ENCODE measurements at regions of chr11 and their contacts with region 1.

Region 1: GRCh38 chr11:36265793-36266628 is 23.2 kb downstream of the COMMD9 start:
- DNase-seq: peak; percentile 58 to 80
- ATAC-seq: peak; percentile 62
- H3K4me3 ChIP-seq: no peak overlapping the region
- H3K27ac ChIP-seq: no peak overlapping the region
- H3K4me1 ChIP-seq: no peaks in the 10 kb centered on the region
- H3K27me3 ChIP-seq: no peaks in the 10 kb centered on the region

Region 2: DNA sequence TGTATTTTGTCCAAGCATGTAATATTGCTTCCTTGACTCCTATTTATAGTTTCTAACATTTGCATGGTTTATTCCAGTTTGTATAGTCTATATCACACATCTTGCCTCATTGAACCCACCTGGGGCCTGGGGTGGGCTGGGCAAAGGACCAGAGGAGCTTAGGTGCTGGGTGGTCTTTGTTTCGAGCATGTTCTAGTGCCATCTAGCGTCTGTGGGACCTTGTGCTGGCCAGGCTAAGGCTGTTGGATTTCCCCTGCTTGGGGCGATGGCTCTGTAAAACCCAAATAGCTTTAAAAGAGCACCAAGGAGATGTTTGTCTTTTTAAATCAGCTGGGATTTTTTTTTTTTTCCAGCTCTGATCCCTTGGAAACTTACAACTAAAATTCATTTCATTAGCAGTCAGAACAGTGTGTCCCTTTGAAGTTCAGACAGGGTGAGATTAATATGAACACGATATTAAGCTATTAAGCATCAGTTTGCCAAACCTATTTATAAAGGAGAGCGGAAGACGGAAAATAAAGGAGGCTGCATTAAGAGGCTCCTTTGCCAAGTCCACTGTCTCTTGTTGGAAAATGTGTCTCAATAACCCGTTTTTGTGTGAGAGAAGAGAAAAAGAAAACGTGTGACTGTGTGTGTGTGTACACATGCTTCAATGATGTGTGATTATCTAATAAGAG is 134.2 kb before region 1 on chr11:
- intact Hi-C with region 1: loop called (anchors 10 kb)
- DNase-seq: peak in 1 of 2 donors; percentile 56
- ATAC-seq: peak; percentile 79
- H3K4me3 ChIP-seq: no peak overlapping the region
- H3K27ac ChIP-seq: no peak overlapping the region
- H3K4me1 ChIP-seq: no peaks in the 10 kb centered on the region
- H3K27me3 ChIP-seq: no peaks in the 10 kb centered on the region

Measured in aorta (tissue), 5 donors.